Natural killer cell (primary cell): ENCODE measurements at regions of chr3 and their contacts with region 1.

Region 1: DNA sequence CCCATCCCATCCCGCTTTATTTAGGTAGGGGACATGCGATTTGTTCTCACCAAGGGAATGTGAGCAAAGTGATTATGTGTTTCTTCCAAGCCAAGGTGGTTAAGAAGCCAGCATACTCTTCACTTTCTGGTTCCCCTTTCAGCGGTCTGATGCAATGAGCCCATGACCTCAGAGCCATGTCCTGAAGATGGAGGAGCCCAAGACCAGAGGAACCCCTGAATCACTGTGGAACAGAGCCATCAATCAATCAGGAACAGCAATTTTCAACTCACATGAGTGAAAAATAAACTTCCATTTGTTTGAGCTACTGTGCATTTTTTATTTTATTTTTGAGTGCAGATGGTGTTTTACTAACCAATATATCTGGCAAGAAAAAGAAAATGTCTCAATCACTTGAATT is 10.8 kb downstream of the THRB start:
- DNase-seq: no peak
- ATAC-seq: no peak
- H3K4me3 ChIP-seq: no peak overlapping the region
- H3K4me3 Mint-ChIP-seq: no peak overlapping the region
- H3K27ac ChIP-seq: no peak overlapping the region
- H3K27ac Mint-ChIP-seq: no peak overlapping the region
- H3K4me1 ChIP-seq: no peaks in the 10 kb centered on the region
- H3K4me1 Mint-ChIP-seq: no peaks in the 10 kb centered on the region
- H3K27me3 ChIP-seq: no peaks in the 10 kb centered on the region
- H3K27me3 Mint-ChIP-seq: no peaks in the 10 kb centered on the region
- CTCF ChIP-seq: no peak

Region 2: DNA sequence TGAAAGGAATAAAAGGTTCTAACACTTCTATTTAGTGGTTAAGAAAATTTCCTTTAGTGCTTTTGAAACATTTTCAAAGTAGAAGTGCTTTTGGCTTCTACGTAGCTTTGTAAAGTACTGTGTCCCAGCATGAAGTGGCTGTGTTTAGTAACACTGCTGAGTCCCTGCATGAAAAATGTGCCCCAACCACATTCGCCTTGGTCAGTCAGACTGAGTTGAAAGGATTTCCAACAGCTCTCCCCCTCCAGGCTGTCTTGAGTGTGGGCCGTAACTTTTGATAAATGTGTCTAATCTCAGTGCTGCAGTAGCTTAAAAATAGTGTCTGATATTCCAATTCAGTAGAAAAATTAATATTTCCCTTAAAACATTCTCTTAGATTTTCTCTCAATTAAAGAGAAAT is 423.8 kb before region 1 on chr3:
- intact Hi-C with region 1: loop called (anchors 5 kb)
- DNase-seq: no peak
- ATAC-seq: no peak
- H3K4me3 ChIP-seq: no peak overlapping the region
- H3K4me3 Mint-ChIP-seq: no peak overlapping the region
- H3K27ac ChIP-seq: no peak overlapping the region
- H3K27ac Mint-ChIP-seq: no peak overlapping the region
- H3K4me1 ChIP-seq: no peaks in the 10 kb centered on the region
- H3K4me1 Mint-ChIP-seq: no peaks in the 10 kb centered on the region
- H3K27me3 ChIP-seq: no peaks in the 10 kb centered on the region
- H3K27me3 Mint-ChIP-seq: peaks cover 0 to 7% of the 10 kb centered on the region in 2 donors
- CTCF ChIP-seq: no peak

Region 3: DNA sequence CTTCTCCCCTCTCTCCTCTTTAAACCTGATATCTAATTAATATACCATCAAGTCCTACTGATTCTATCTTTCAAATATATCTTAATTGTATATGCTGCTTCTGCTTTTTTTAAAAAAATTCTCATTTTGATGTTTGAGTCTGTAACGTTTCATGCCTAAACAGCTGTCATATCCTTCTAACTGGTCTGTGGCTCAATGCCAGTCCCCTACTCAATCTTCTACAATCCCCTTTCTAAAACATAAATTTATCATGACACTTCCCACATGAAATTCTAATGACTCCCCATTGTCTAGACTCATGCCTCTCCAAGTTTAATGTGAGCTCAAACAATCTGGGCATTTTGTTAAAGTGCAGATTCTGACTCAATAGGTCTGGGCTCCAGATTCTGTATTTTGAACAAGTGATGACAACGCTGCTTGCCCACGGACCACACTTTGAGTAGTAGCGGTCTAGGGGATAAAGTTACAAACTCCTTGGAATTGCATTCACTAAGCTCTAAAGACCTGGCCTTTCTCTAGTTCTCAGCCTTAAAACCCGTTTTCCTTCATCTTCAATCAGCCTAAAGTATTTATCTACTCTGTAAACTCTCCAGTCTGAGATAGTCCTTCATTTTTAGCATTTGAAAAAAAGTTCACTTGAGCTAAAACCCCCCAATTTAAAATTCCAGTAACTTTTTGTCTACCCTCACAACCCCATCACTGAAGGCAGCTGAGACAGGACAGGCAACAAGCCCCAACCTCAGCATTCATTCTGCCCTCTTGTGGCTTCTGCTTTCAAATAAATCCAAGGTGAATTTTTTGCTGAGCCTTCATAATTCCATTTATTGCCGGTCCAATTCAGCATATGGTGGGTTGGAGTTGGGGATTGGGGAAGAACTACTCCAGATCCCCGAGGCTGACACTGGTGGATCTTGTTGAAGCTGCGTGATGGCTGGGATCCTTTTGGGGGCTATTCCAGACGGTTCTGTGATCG is 98.8 kb after region 1 on chr3:
- intact Hi-C with region 1: no loop called
- DNase-seq: no peak
- ATAC-seq: no peak
- H3K4me3 ChIP-seq: no peak overlapping the region
- H3K4me3 Mint-ChIP-seq: no peak overlapping the region
- H3K27ac ChIP-seq: no peak overlapping the region
- H3K27ac Mint-ChIP-seq: no peak overlapping the region
- H3K4me1 ChIP-seq: no peaks in the 10 kb centered on the region
- H3K4me1 Mint-ChIP-seq: no peaks in the 10 kb centered on the region
- H3K27me3 ChIP-seq: no peaks in the 10 kb centered on the region
- H3K27me3 Mint-ChIP-seq: peaks cover 0 to 2% of the 10 kb centered on the region in 2 donors
- CTCF ChIP-seq: no peak